ENCODE measurements at regions of chr10 and their contacts with region 1.

Region 1: GRCh38 chr10:72692057-72692910 is at the start of gene MCU:
- DNase-seq: peak; percentile 97
- H3K4me3 ChIP-seq: peak within 1 kb of the TSS; percentile 68 to 89 (median 87)
- H3K27ac ChIP-seq: peak within 1 kb of the TSS; percentile 84 to 86 (median 85)
- H3K4me1 ChIP-seq: peaks cover 16 to 21% of the 10 kb centered on the region in 2 donors
- H3K27me3 ChIP-seq: no peaks in the 10 kb centered on the region
- CTCF ChIP-seq: no peak
- POLR2A ChIP-seq: peak; percentile 79 to 99
- total RNA-seq, gene MCU: 11.4 to 33.3 (median 24.9) TPM

Region 2: GRCh38 chr10:72625608-72626443 is 66.5 kb before region 1 on chr10 and contains the start of gene MICU1:
- intact Hi-C with region 1: loop called (anchors 10 kb)
- DNase-seq: peak; percentile 96 to 97
- H3K4me3 ChIP-seq: peak within 1 kb of the TSS; percentile 45 to 79 (median 74)
- H3K27ac ChIP-seq: peak within 1 kb of the TSS in 2 of 3 donors; percentile 64 to 67
- H3K4me1 ChIP-seq: peaks cover 7 to 15% of the 10 kb centered on the region in 2 donors
- H3K27me3 ChIP-seq: no peaks in the 10 kb centered on the region
- CTCF ChIP-seq: peak in 1 of 6 experiments; percentile 4
- POLR2A ChIP-seq: peak in 1 of 2 donors; percentile 88
- total RNA-seq, gene MICU1: 26.5 to 33.9 (median 31.5) TPM

Region 3: DNA sequence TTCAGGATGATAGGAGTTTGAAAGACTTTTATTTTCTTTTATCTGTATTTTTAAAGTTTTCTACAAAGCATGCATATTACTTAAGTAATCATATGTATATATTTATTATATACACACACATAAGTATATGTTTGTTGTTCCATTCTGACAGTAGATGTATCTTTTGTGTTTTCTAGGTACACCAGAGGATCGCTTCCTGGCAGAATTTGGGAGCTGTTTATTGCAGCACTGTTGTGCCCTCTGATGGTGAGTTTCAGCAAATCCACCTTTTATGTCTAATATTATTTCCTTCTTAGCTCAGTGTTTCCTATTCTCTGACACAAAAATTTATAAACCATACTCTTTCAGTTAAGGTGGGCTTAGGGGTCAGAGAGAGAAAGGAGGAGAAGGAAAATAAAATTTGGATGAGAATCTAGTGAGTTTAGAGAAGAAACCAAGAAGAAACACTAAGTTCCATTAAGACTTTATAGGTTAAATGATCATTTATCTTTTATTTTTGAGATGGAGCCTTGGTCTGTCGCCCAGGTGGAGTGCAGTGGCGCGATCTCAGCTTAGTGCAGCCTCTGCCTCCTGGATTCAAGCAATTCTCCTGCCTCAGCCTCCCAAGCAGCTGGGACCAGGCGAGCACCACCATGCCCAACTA is 142.0 kb after region 1 on chr10:
- intact Hi-C with region 1: loop called (anchors 5 kb)
- DNase-seq: peak; percentile 42 to 43
- H3K4me3 ChIP-seq: no peak overlapping the region
- H3K27ac ChIP-seq: no peak overlapping the region
- H3K4me1 ChIP-seq: peaks cover 15 to 36% of the 10 kb centered on the region in 2 donors
- H3K27me3 ChIP-seq: no peaks in the 10 kb centered on the region
- CTCF ChIP-seq: peak; percentile 32 to 85 (median 66)
- POLR2A ChIP-seq: no peak

Measured in thyroid gland (tissue), 4 donors.